ENCODE measurements at regions of chr2 and their contacts with region 1.

Region 1: GRCh38 chr2:234060236-234060635 is 9.7 kb downstream of the SPP2 start:
- DNase-seq: no peak
- H3K4me3 ChIP-seq: no peak overlapping the region
- H3K27ac ChIP-seq: no peak overlapping the region
- H3K4me1 ChIP-seq: no peaks in the 10 kb centered on the region
- H3K27me3 ChIP-seq: peaks cover 0 to 4% of the 10 kb centered on the region in 2 experiments
- CTCF ChIP-seq: no peak
- POLR2A ChIP-seq: no peak

Region 2: DNA sequence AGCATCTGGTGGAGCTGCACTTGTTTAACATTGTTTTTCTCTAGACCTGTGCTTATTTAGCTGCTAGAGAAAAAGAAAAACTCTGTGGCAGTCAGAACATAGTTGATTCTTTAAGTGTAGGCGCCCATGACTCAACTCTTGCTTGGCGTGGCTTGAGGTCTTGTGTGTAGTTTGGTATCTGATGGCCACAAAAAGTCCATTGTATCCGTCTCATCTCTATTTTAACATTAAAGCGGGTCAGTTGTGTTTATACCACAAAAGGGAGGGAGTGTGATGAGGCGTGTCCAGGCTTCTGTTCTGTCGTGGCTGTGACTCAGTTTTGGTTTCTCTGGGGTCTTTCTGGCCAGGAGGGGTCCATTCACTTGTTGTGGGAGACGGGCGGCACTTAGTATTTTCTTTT is 467.0 kb before region 1 on chr2:
- CTCF ChIA-PET with region 1: no interaction called
- POLR2A ChIA-PET with region 1: no interaction called
- dilution Hi-C with region 1: no loop called
- intact Hi-C with region 1: loop called (anchors 10 kb)
- DNase-seq: no peak
- H3K4me3 ChIP-seq: no peak overlapping the region
- H3K27ac ChIP-seq: no peak overlapping the region
- H3K4me1 ChIP-seq: no peaks in the 10 kb centered on the region
- H3K27me3 ChIP-seq: no peaks in the 10 kb centered on the region
- CTCF ChIP-seq: no peak
- POLR2A ChIP-seq: no peak

Region 3: GRCh38 chr2:234032279-234032856 is 27.9 kb before region 1 on chr2:
- CTCF ChIA-PET with region 1: no interaction called
- POLR2A ChIA-PET with region 1: no interaction called
- dilution Hi-C with region 1: no loop called
- intact Hi-C with region 1: no loop called
- DNase-seq: peak; percentile 57
- H3K4me3 ChIP-seq: no peak overlapping the region
- H3K27ac ChIP-seq: peak overlapping the region; percentile 59
- H3K4me1 ChIP-seq: peaks cover 17% of the 10 kb centered on the region
- H3K27me3 ChIP-seq: no peaks in the 10 kb centered on the region
- CTCF ChIP-seq: no peak
- POLR2A ChIP-seq: no peak

Region 4: GRCh38 chr2:234044157-234044556 is 16.1 kb before region 1 on chr2:
- CTCF ChIA-PET with region 1: no interaction called
- POLR2A ChIA-PET with region 1: no interaction called
- dilution Hi-C with region 1: no loop called
- intact Hi-C with region 1: no loop called
- DNase-seq: peak; percentile 65
- H3K4me3 ChIP-seq: no peak overlapping the region
- H3K27ac ChIP-seq: no peak overlapping the region
- H3K4me1 ChIP-seq: peaks cover 9% of the 10 kb centered on the region
- H3K27me3 ChIP-seq: no peaks in the 10 kb centered on the region
- CTCF ChIP-seq: no peak
- POLR2A ChIP-seq: no peak